ENCODE measurements at regions of chr1 and their contacts with region 1.

Region 1: DNA sequence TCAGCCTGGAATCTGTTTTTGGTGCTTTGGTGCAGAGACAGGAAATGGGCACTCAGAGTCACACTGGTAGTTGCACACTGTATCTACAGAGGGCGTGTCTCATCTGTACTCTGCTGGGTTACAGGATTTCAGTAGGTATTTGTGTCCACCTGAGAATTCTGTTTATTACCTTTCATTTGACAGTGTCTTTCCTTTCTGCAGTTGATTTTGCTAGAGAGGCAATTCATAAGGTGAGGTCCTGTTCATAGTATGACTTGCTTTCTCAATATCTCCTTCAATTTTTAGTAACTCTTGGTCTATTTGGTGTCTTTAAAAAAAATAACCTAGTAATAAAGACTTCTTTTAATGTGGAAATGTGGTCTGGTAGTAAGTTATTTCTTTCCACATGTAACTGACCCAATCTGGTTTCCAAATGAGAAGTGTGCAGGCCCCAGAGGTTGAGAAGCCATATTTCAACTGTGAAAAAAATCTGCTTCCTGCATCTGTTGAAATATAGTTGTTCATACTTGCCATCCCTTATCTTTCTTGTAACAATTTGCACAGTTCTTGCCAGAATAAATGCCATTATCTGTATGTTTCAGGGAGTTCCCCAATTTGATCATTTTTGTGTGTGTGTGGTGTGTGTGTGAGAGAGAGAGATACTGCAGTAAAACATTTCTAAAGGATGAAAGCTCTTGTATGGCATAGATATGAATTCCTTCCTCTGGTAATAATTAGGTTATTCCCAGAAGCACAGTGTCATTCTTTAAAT is 78.4 kb upstream of the DNAJC6 start:
- DNase-seq: peak; percentile 31
- H3K4me3 Mint-ChIP-seq: no peak overlapping the region
- H3K27ac Mint-ChIP-seq: no peak overlapping the region
- H3K4me1 Mint-ChIP-seq: peaks cover 14% of the 10 kb centered on the region
- H3K27me3 Mint-ChIP-seq: peaks cover 4% of the 10 kb centered on the region

Region 2: GRCh38 chr1:65214340-65215027 is 16.4 kb before region 1 on chr1:
- CTCF ChIA-PET with region 1: interaction called, 7 read pairs
- intact Hi-C with region 1: loop called (anchors 1 kb)
- DNase-seq: no peak
- H3K4me3 Mint-ChIP-seq: no peak overlapping the region
- H3K27ac Mint-ChIP-seq: no peak overlapping the region
- H3K4me1 Mint-ChIP-seq: peaks cover 41% of the 10 kb centered on the region
- H3K27me3 Mint-ChIP-seq: no peaks in the 10 kb centered on the region

Region 3: DNA sequence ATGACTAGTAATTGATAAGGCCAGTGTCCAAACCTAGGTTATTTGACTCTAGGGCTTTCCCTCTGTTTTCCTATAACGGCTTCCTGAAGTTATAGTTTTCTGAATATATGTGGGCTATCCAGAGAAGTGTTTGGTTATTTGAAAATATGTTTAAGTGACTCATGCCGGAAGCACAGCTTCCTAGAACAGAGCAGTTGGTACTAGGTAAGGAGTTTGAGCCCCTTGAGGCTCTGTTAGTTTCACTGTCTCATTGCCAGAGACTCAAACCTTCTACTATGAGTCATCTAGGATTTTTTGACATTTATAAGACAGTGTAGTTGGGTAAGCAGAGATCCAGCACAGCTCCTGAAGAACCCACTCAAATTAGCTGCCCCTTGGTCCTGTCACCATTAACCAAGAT is 162.4 kb after region 1 on chr1:
- CTCF ChIA-PET with region 1: no interaction called
- intact Hi-C with region 1: loop called (anchors 2 kb)
- DNase-seq: peak; percentile 39
- H3K4me3 Mint-ChIP-seq: no peak overlapping the region
- H3K27ac Mint-ChIP-seq: no peak overlapping the region
- H3K4me1 Mint-ChIP-seq: peaks cover 22% of the 10 kb centered on the region
- H3K27me3 Mint-ChIP-seq: no peaks in the 10 kb centered on the region

Region 4: GRCh38 chr1:65894738-65895605 is 664.1 kb after region 1 on chr1:
- CTCF ChIA-PET with region 1: no interaction called
- intact Hi-C with region 1: no loop called
- DNase-seq: no peak
- H3K4me3 Mint-ChIP-seq: no peak overlapping the region
- H3K27ac Mint-ChIP-seq: no peak overlapping the region
- H3K4me1 Mint-ChIP-seq: no peaks in the 10 kb centered on the region
- H3K27me3 Mint-ChIP-seq: peaks cover 19% of the 10 kb centered on the region